ENCODE measurements at regions of chr5 and their contacts with region 1.

Region 1: DNA sequence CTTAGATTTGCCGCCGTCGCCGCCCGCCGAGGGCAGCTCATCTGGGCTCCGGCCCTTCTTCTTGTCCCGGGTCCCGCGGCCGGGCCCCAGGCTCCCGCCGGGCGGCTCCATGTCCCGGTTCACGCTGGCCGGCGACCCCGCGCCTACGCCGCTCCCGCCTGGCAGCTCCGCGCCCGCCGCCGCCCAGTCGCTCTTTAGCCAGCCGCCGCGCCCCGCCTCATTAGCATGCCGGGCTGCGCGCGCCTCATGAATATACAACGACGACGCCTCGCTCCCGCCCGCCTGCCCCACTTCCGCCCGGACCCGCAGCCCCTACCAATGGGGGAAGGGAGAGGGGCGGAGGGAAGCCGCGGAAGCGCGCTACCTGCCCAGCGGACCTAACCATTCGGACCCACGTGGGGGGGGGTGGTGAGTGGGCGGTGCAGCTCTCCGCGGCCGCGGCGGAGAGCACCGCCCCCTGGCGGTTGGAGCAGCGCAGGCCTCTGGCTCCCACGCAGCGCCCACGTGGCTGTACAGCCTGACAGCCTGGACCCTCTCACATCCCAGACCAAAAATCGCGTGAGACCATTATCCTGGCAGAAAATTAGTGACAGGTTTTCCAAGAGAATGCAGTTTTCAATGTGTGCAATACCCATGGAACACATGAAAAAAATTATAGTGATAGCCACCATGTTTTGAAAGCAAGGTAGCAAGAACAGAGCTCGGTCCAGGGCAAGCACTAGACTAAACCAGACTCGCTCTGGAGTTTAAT is at the start of gene DIAPH1:
- DNase-seq: peak; percentile 95 to 99 (median 99)
- ATAC-seq: peak; percentile 91
- H3K4me3 ChIP-seq: peak within 1 kb of the TSS; percentile 90 to 95
- H3K4me3 Mint-ChIP-seq: peak within 1 kb of the TSS; percentile 97
- H3K27ac ChIP-seq: peak within 1 kb of the TSS; percentile 77 to 94
- H3K27ac Mint-ChIP-seq: peak within 1 kb of the TSS; percentile 97
- H3K4me1 ChIP-seq: peaks cover 31% of the 10 kb centered on the region
- H3K4me1 Mint-ChIP-seq: peaks cover 52% of the 10 kb centered on the region
- H3K27me3 ChIP-seq: no peaks in the 10 kb centered on the region
- H3K27me3 Mint-ChIP-seq: no peaks in the 10 kb centered on the region
- CTCF ChIP-seq: peak; percentile 88
- total RNA-seq, gene DIAPH1: 155 to 166 TPM

Region 2: GRCh38 chr5:141590127-141590526 is 28.9 kb before region 1 on chr5:
- CTCF ChIA-PET with region 1: interaction called, 366 read pairs
- POLR2A ChIA-PET with region 1: interaction called, 105 read pairs
- intact Hi-C with region 1: loop called (anchors 1 kb)
- DNase-seq: no peak
- ATAC-seq: no peak
- H3K4me3 ChIP-seq: no peak overlapping the region
- H3K4me3 Mint-ChIP-seq: no peak overlapping the region
- H3K27ac ChIP-seq: no peak overlapping the region
- H3K27ac Mint-ChIP-seq: no peak overlapping the region
- H3K4me1 ChIP-seq: peaks cover 16% of the 10 kb centered on the region
- H3K4me1 Mint-ChIP-seq: peaks cover 59% of the 10 kb centered on the region
- H3K27me3 ChIP-seq: no peaks in the 10 kb centered on the region
- H3K27me3 Mint-ChIP-seq: no peaks in the 10 kb centered on the region
- CTCF ChIP-seq: no peak

Region 3: GRCh38 chr5:141598391-141599350 is 20.3 kb before region 1 on chr5:
- CTCF ChIA-PET with region 1: interaction called, 366 read pairs
- POLR2A ChIA-PET with region 1: interaction called, 105 read pairs
- intact Hi-C with region 1: no loop called
- DNase-seq: peak in 1 of 9 experiments; percentile 29
- ATAC-seq: peak; percentile 44
- H3K4me3 ChIP-seq: no peak overlapping the region
- H3K4me3 Mint-ChIP-seq: peak overlapping the region; percentile 40
- H3K27ac ChIP-seq: peak overlapping the region in 1 of 2 experiments; percentile 67
- H3K27ac Mint-ChIP-seq: peak overlapping the region; percentile 78
- H3K4me1 ChIP-seq: peaks cover 69% of the 10 kb centered on the region
- H3K4me1 Mint-ChIP-seq: peaks cover 80% of the 10 kb centered on the region
- H3K27me3 ChIP-seq: no peaks in the 10 kb centered on the region
- H3K27me3 Mint-ChIP-seq: no peaks in the 10 kb centered on the region
- CTCF ChIP-seq: no peak

Region 4: GRCh38 chr5:141605523-141606277 is 13.3 kb before region 1 on chr5:
- CTCF ChIA-PET with region 1: interaction called, 45 read pairs
- POLR2A ChIA-PET with region 1: interaction called, 73 read pairs
- intact Hi-C with region 1: loop called (anchors 1 kb)
- DNase-seq: peak; percentile 34 to 95 (median 76)
- ATAC-seq: peak; percentile 92
- H3K4me3 ChIP-seq: peak overlapping the region; percentile 19 to 29
- H3K4me3 Mint-ChIP-seq: peak overlapping the region; percentile 69
- H3K27ac ChIP-seq: peak overlapping the region; percentile 56 to 87
- H3K27ac Mint-ChIP-seq: peak overlapping the region; percentile 85
- H3K4me1 ChIP-seq: peaks cover 91% of the 10 kb centered on the region
- H3K4me1 Mint-ChIP-seq: peaks cover 87% of the 10 kb centered on the region
- H3K27me3 ChIP-seq: no peaks in the 10 kb centered on the region
- H3K27me3 Mint-ChIP-seq: no peaks in the 10 kb centered on the region
- CTCF ChIP-seq: no peak

Region 5: DNA sequence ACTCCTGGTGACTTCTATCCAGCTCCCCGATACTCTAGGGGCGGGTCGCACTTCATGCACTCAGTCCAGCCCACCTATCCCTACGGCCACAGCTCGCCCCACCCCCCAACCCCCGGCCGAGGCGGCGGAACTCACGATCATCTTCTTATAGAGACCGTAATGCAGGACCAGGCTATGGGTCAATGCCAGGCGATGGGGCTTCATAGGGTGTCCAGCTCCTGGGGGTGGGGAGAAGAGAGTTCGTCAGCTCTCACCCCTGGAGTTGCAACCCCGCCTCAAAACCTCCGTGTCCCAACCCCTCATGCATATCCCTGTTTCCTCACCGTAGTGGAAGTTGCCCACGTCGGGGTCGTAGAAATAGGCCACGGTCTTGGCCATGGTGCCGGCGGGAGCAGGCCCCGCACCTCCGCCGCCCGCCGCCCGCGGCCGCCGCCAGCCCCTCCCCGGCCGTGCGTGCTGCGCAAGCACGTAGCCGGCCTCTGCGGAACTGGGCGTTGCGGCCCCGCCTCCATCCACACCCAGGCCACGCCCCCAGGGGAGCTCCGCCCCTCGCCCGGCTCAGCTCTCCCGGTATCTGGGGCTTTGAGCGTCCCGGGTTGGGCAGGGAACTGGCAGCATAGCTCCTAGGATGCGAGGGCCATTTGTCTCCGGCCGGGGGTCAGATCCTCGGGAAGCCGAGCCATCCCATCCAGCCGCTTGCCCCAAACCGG is 17.6 kb after region 1 on chr5 and contains the starts of genes HDAC3 and RELL2:
- CTCF ChIA-PET with region 1: interaction called, 95 read pairs
- POLR2A ChIA-PET with region 1: interaction called, 39 read pairs
- intact Hi-C with region 1: loop called (anchors 1 kb)
- DNase-seq: peak; percentile 88 to 97 (median 94)
- ATAC-seq: peak; percentile 89
- H3K4me3 ChIP-seq: peak within 1 kb of the TSS; percentile 98 to 99
- H3K4me3 Mint-ChIP-seq: peak within 1 kb of the TSS; percentile 92
- H3K27ac ChIP-seq: peak within 1 kb of the TSS; percentile 78 to 81
- H3K27ac Mint-ChIP-seq: peak within 1 kb of the TSS; percentile 89
- H3K4me1 ChIP-seq: peaks cover 28% of the 10 kb centered on the region
- H3K4me1 Mint-ChIP-seq: peaks cover 50% of the 10 kb centered on the region
- H3K27me3 ChIP-seq: no peaks in the 10 kb centered on the region
- H3K27me3 Mint-ChIP-seq: no peaks in the 10 kb centered on the region
- CTCF ChIP-seq: no peak
- total RNA-seq, gene HDAC3: 48.9 to 54.8 TPM
- total RNA-seq, gene RELL2: 9.5 to 9.8 TPM

Region 6: DNA sequence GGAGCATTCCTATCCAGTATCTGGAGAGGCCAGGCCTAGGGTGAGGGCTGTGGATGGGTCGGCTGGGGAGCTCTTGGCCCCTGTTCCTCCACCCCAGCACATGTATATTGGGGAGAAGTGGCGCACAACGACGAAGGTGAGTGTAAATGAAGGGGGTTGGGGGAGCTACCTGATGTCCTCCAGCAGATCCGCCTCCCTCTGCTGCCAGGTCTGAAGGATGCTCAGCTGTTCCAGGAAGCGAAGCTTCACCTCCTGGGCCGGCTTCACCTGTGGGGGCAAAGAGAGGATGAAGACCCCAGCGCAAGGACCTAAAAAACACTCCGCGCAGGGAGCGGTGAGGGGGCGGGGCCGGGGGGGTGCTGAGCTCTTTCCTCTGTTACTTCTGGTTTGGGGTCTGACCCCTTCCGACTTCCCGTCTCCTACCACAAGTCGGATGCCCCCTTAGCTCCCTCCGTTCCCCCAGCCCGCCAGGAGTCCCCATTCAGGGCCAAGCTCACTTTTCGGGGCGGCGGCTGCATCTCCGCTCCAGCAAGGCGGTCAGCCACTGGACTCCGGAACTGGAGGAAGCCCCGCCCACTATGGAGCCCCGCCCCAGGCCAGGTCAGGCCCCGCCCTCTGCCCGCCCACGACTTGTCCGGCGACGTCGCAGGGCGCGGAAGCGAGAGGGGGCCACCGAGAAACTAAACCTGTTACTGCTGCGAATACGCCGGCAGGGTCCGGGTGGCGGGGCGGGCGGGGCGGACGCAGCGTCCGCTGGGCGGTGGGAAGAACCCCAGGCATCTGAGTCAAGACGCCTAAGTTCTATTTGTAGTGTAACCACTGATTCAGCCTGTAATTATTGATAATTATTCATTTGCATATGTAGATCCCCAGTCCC is 32.1 kb after region 1 on chr5 and contains the start of gene FCHSD1:
- CTCF ChIA-PET with region 1: interaction called, 5 read pairs
- POLR2A ChIA-PET with region 1: interaction called, 7 read pairs
- intact Hi-C with region 1: loop called in 1 of 2 experiments (anchors 1 kb)
- DNase-seq: peak; percentile 70 to 89 (median 81)
- ATAC-seq: peak; percentile 92
- H3K4me3 ChIP-seq: peak within 1 kb of the TSS; percentile 64
- H3K4me3 Mint-ChIP-seq: peak within 1 kb of the TSS; percentile 89
- H3K27ac ChIP-seq: peak within 1 kb of the TSS; percentile 63 to 73
- H3K27ac Mint-ChIP-seq: peak within 1 kb of the TSS; percentile 87
- H3K4me1 ChIP-seq: peaks cover 20% of the 10 kb centered on the region
- H3K4me1 Mint-ChIP-seq: peaks cover 52% of the 10 kb centered on the region
- H3K27me3 ChIP-seq: no peaks in the 10 kb centered on the region
- H3K27me3 Mint-ChIP-seq: no peaks in the 10 kb centered on the region
- CTCF ChIP-seq: no peak
- total RNA-seq, gene FCHSD1: 95.8 to 101 TPM

Region 7: GRCh38 chr5:141968914-141969608 is 350.1 kb after region 1 on chr5 and contains the start of gene RNF14:
- CTCF ChIA-PET with region 1: no interaction called
- POLR2A ChIA-PET with region 1: interaction called, 3 read pairs
- intact Hi-C with region 1: loop called in 1 of 2 experiments (anchors 1 kb)
- DNase-seq: peak; percentile 86 to 97 (median 92)
- ATAC-seq: peak; percentile 94
- H3K4me3 ChIP-seq: peak within 1 kb of the TSS; percentile 77 to 94
- H3K4me3 Mint-ChIP-seq: peak within 1 kb of the TSS; percentile 98
- H3K27ac ChIP-seq: peak within 1 kb of the TSS; percentile 80 to 97
- H3K27ac Mint-ChIP-seq: peak within 1 kb of the TSS; percentile 99
- H3K4me1 ChIP-seq: peaks cover 18% of the 10 kb centered on the region
- H3K4me1 Mint-ChIP-seq: peaks cover 27% of the 10 kb centered on the region
- H3K27me3 ChIP-seq: no peaks in the 10 kb centered on the region
- H3K27me3 Mint-ChIP-seq: no peaks in the 10 kb centered on the region
- CTCF ChIP-seq: peak; percentile 98
- total RNA-seq, gene RNF14: 11.3 to 12.8 TPM

Measured in CD8-positive, alpha-beta T cell (primary cell).